ENCODE measurements at regions of chr16 and their contacts with region 1.

Region 1: DNA sequence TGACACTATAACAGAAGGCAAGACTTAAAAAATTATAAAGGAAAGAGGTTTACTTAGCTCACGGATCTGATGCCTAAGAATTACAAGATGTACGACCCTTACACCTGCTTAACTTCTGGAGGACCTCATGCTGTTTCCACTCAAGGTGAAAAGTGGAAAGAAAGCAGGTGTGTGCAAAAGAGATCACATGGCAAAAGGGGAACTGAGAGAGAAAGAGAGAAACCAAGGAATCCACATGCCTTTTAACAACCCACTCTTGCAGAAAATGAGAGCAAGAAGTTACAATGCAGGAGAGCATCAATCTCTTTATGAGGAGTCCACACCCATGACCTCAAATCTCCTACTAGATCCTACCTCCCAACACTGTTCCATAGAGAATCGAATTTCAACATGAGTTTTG is 2382.2 kb downstream of the TP53TG3F start:
- DNase-seq: no peak
- ATAC-seq: no peak
- H3K4me3 Mint-ChIP-seq: no peak overlapping the region
- H3K27ac Mint-ChIP-seq: no peak overlapping the region
- H3K4me1 Mint-ChIP-seq: no peaks in the 10 kb centered on the region
- H3K27me3 Mint-ChIP-seq: no peaks in the 10 kb centered on the region

Region 2: GRCh38 chr16:35414563-35414962 is 427.1 kb before region 1 on chr16:
- CTCF ChIA-PET with region 1: no interaction called
- POLR2A ChIA-PET with region 1: no interaction called
- intact Hi-C with region 1: no loop called
- DNase-seq: no peak
- ATAC-seq: no peak
- H3K4me3 Mint-ChIP-seq: no peak overlapping the region
- H3K27ac Mint-ChIP-seq: no peak overlapping the region
- H3K4me1 Mint-ChIP-seq: no peaks in the 10 kb centered on the region
- H3K27me3 Mint-ChIP-seq: no peaks in the 10 kb centered on the region

Region 3: DNA sequence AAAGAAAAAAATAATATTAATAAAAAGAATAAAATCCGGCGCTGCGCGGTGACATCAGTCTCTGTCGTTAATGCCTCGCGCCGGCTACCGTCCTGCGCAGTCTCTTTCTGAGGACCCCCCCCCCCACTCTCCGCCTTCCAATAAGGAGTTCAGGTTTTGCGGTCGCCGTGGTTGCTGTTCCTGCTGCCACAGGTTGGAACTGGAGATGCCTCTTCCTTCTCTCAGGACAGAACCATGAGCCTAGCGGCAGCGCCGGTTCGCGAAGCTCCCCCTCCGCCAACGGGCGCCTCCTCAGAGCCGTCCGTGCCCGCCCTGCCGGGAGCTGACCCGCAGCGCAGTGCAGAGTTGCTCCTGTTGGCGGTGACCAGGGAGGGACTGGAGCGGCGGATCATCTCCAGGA is 288.9 kb before region 1 on chr16:
- CTCF ChIA-PET with region 1: no interaction called
- POLR2A ChIA-PET with region 1: no interaction called
- intact Hi-C with region 1: no loop called
- DNase-seq: no peak
- ATAC-seq: no peak
- H3K4me3 Mint-ChIP-seq: no peak overlapping the region
- H3K27ac Mint-ChIP-seq: no peak overlapping the region
- H3K4me1 Mint-ChIP-seq: no peaks in the 10 kb centered on the region
- H3K27me3 Mint-ChIP-seq: no peaks in the 10 kb centered on the region

Region 4: GRCh38 chr16:35690413-35690812 is 151.2 kb before region 1 on chr16:
- CTCF ChIA-PET with region 1: no interaction called
- POLR2A ChIA-PET with region 1: no interaction called
- intact Hi-C with region 1: loop called in 1 of 2 experiments (anchors 10 kb)
- DNase-seq: no peak
- ATAC-seq: no peak
- H3K4me3 Mint-ChIP-seq: no peak overlapping the region
- H3K27ac Mint-ChIP-seq: no peak overlapping the region
- H3K4me1 Mint-ChIP-seq: no peaks in the 10 kb centered on the region
- H3K27me3 Mint-ChIP-seq: no peaks in the 10 kb centered on the region

Region 5: GRCh38 chr16:35733971-35734702 is 107.5 kb before region 1 on chr16:
- CTCF ChIA-PET with region 1: no interaction called
- POLR2A ChIA-PET with region 1: no interaction called
- intact Hi-C with region 1: no loop called
- DNase-seq: no peak
- ATAC-seq: no peak
- H3K4me3 Mint-ChIP-seq: no peak overlapping the region
- H3K27ac Mint-ChIP-seq: no peak overlapping the region
- H3K4me1 Mint-ChIP-seq: no peaks in the 10 kb centered on the region
- H3K27me3 Mint-ChIP-seq: no peaks in the 10 kb centered on the region

Region 6: DNA sequence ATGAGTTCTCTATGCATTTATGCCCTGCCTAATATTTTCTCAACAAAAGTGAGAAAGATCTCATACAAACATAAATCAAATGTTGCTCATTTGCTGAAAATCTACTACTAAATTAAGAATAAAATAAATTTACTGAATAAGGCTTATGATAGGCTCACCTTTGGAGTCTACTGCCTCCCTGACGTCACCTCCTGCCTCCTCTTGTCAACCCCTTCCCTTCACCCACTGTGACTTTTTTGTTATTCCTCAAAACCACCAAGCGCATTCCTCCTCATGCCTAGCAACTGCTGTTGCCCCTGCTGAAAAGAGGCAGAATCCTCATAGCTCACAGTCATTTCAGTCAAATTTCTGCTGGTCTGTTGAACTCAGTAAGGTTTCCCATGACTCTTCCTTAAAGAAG is 40.0 kb after region 1 on chr16:
- CTCF ChIA-PET with region 1: no interaction called
- POLR2A ChIA-PET with region 1: no interaction called
- intact Hi-C with region 1: loop called in 1 of 2 experiments (anchors 5 kb)
- DNase-seq: no peak
- ATAC-seq: no peak
- H3K4me3 Mint-ChIP-seq: no peak overlapping the region
- H3K27ac Mint-ChIP-seq: no peak overlapping the region
- H3K4me1 Mint-ChIP-seq: no peaks in the 10 kb centered on the region
- H3K27me3 Mint-ChIP-seq: no peaks in the 10 kb centered on the region